BJ (cell line): ENCODE measurements at regions of chr2 and their contacts with region 1.

Region 1: GRCh38 chr2:119264781-119265692 is 41.4 kb downstream of the STEAP3 start:
- DNase-seq: no peak
- H3K4me3 ChIP-seq: no peak overlapping the region
- H3K27me3 ChIP-seq: no peaks in the 10 kb centered on the region
- CTCF ChIP-seq: peak; percentile 90

Region 2: DNA sequence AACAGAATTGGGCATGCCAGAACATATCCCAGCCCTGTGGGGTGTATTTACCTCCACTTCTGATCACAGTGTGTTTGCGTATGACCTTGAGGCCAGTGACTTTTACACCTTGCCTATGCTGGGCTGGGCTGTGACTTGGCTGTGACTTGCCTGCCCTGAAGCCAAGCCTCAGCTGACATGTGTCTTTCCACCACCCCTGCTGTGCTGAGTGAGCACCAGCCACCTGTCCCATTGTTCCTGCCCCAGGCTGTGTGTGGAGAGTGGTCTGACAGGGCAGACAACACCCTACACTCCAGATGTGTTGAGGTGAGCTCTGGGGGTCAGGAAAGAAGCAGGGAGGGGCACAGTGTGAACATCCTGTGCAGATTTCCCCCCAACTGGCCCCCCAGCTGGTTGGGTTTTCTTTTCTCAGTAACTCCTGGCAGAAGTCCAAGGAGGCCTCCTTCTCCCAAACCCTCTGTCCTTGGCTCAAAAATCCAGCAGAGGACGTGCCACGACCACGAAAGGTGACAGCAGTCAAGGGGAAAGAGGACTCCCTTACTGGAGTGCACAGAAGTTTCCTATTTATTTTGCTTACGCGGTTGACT is 46.5 kb before region 1 on chr2:
- CTCF ChIA-PET with region 1: interaction called, 34 read pairs
- POLR2A ChIA-PET with region 1: no interaction called
- DNase-seq: no peak
- H3K4me3 ChIP-seq: no peak overlapping the region
- H3K27me3 ChIP-seq: no peaks in the 10 kb centered on the region
- CTCF ChIP-seq: peak; percentile 71

Region 3: DNA sequence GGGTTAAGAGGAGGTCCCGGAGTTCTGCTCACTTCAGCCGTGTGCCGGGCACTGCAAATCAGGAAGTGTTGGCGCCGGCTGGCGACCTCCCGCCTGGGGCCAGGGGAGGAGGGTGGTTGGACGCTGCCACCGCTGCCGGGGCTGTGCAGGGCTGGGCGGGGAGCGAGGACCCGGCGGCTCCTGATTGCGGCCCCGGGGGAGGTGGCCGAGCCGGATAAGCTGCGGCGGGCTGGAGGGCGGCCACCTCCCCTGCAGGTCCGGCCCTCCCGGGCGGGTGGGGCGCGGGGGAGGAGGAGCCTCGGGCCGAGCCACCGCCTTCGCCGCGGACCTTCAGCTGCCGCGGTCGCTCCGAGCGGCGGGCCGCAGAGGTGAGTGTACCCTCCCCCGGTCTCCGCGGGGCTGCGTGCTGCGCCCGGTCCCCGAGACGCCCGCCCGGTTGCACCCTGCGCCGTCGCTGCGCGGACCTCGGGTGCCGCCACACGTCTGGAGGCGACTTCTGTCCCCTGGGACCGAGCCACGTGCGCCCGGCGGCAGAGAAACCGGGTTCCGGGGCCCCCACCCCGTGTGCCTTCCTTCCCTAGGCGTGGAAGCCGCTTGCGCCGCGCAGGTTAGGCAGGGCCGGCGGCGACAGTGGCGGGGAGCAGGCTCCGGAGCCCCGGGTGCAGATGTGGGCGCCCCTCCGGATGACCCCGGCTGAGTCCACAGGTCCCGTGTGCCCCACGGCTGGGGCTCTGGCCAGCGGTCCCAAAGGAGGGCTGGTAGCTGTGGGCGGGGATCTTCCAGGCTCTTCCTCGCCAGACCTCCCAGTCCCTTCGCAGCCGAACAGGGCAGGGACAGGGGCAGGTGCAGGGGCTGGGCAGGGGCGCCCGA is 41.3 kb before region 1 on chr2 and contains the start of gene STEAP3:
- CTCF ChIA-PET with region 1: interaction called, 34 read pairs
- POLR2A ChIA-PET with region 1: no interaction called
- DNase-seq: no peak
- H3K4me3 ChIP-seq: peak within 1 kb of the TSS; percentile 65
- H3K27me3 ChIP-seq: no peaks in the 10 kb centered on the region; the same call in 1 of the 2 replicates
- CTCF ChIP-seq: no peak
- polyA plus RNA-seq, gene STEAP3: 7.7 and 13.9 TPM in 2 replicates

Region 4: DNA sequence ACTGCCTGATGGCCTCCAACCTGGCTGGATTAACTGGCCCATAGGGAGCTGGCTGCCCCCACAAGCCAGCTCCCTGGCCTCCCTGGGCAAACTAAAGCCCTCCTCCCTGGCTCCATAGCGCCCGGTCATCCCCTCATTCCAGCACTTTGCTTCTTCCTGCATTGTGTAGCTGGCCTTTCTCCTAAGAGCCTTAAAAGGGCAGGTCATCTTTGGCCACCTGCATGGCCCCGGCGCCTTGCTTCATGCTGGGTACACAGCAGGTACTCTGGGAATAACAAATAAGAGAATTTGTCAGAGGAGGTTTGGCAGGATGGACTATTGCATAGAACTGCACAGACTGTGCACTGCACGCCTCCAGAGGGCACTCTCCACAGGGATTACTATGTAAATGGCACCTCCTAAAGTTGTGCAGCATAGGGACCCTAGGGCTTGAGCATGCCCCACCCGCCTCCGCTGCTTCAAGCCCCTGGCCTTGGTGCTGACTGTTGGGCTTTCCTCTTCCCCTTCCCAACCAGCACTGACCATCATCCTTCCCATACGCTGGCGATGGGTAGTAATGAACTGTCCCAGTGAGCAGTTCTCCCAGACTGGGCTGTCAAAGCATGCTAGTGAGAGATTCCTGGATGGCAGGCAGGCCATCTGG is 30.5 kb before region 1 on chr2:
- CTCF ChIA-PET with region 1: interaction called, 18 read pairs
- POLR2A ChIA-PET with region 1: no interaction called
- DNase-seq: no peak
- H3K4me3 ChIP-seq: no peak overlapping the region
- H3K27me3 ChIP-seq: no peaks in the 10 kb centered on the region; the same call in 1 of the 2 replicates
- CTCF ChIP-seq: peak; percentile 52